Activated CD4-positive, alpha-beta memory T cell treated with anti-CD3 and anti-CD28 coated beads for 36 hours (primary cell): ENCODE measurements at regions of chr15 and their contacts with region 1.

Region 1: GRCh38 chr15:38563723-38564519 is 693 bp downstream of the RASGRP1 start:
- DNase-seq: peak; percentile 92
- H3K4me3 Mint-ChIP-seq: peak overlapping the region; percentile 95
- H3K27ac Mint-ChIP-seq: peak overlapping the region; percentile 99
- H3K4me1 Mint-ChIP-seq: peaks cover 53% of the 10 kb centered on the region
- H3K27me3 Mint-ChIP-seq: no peaks in the 10 kb centered on the region

Region 2: DNA sequence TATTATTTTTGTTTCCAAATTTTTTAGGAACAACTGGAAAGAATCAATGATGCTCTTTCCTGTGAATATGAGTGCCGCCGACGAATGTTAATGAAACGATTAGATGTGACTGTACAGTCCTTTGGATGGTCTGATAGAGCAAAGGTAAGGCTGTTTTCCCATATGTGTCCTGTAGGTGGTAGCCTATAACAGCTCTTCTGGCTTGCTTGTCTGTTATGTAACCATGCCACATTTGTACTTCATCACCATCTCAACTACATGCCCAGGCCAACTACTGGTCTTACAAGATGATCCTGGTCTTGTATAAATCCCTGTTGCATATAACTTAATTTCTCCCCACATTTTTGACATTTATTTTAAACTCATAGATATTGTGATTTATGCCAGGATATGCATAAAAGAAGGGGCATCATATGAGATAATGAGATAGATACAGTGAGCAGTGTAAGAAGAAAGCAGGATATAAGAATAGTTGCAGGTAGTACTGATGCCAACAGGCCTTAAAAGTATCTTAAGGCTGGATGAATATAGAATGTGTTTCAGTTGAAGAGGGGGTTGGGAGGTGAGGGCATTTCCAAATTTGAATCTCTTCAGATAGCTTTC is 89.7 kb before region 1 on chr15:
- CTCF ChIA-PET with region 1: interaction called, 12 read pairs
- POLR2A ChIA-PET with region 1: interaction called, 3 read pairs
- intact Hi-C with region 1: loop called (anchors 1 kb)
- DNase-seq: no peak
- H3K4me3 Mint-ChIP-seq: no peak overlapping the region
- H3K27ac Mint-ChIP-seq: no peak overlapping the region
- H3K4me1 Mint-ChIP-seq: peaks cover 9% of the 10 kb centered on the region
- H3K27me3 Mint-ChIP-seq: no peaks in the 10 kb centered on the region

Region 3: DNA sequence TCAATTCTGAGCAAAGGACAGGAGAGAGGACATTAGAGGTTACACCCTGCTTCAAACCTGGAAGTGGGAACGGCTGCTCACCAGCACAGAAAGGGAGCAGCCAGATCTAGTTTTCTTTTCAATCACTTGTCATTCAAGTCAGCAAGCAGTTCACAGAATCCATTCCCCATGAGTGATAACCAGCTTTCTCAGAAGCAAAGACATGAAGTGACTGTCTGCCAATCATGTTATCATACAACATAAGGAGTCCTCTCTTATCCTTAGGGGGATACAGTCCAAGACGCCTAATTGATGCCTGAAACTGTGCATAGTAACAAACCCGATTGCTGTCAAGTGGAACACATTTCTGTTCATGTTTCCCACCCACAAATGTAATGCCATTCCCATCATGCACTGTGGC is 55.3 kb before region 1 on chr15:
- CTCF ChIA-PET with region 1: interaction called, 16 read pairs
- POLR2A ChIA-PET with region 1: interaction called, 4 read pairs
- intact Hi-C with region 1: loop called (anchors 1 kb)
- DNase-seq: peak; percentile 55
- H3K4me3 Mint-ChIP-seq: no peak overlapping the region
- H3K27ac Mint-ChIP-seq: peak overlapping the region; percentile 88
- H3K4me1 Mint-ChIP-seq: peaks cover 38% of the 10 kb centered on the region
- H3K27me3 Mint-ChIP-seq: no peaks in the 10 kb centered on the region

Region 4: GRCh38 chr15:38631126-38632075 is 67.5 kb after region 1 on chr15:
- CTCF ChIA-PET with region 1: interaction called, 17 read pairs
- POLR2A ChIA-PET with region 1: interaction called, 15 read pairs
- intact Hi-C with region 1: no loop called
- DNase-seq: no peak
- H3K4me3 Mint-ChIP-seq: no peak overlapping the region
- H3K27ac Mint-ChIP-seq: peak overlapping the region; percentile 87
- H3K4me1 Mint-ChIP-seq: peaks cover 39% of the 10 kb centered on the region
- H3K27me3 Mint-ChIP-seq: no peaks in the 10 kb centered on the region

Region 5: DNA sequence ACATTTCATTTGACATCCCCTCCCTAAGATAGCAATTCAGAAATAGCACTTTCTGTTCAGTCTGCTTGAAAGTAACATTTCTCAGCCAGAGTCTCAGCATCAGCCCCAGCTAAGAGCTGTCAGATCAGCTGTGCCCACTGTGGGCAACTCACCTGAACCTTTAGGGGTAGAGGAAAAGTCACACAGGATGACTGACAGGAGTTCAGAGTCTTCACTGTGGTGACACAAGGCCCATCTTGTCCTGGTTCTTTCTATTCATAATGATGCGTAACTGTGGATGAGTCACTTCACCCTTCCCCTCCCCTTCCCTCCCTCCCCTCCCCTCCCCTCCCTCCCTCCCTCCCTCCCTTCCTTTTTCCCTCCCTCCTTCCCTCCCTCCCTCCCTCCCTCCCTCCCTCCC is 96.8 kb after region 1 on chr15:
- CTCF ChIA-PET with region 1: interaction called, 13 read pairs
- POLR2A ChIA-PET with region 1: interaction called, 7 read pairs
- intact Hi-C with region 1: loop called (anchors 1 kb)
- DNase-seq: peak; percentile 65
- H3K4me3 Mint-ChIP-seq: peak overlapping the region; percentile 62
- H3K27ac Mint-ChIP-seq: peak overlapping the region; percentile 75
- H3K4me1 Mint-ChIP-seq: peaks cover 77% of the 10 kb centered on the region
- H3K27me3 Mint-ChIP-seq: no peaks in the 10 kb centered on the region

Region 6: DNA sequence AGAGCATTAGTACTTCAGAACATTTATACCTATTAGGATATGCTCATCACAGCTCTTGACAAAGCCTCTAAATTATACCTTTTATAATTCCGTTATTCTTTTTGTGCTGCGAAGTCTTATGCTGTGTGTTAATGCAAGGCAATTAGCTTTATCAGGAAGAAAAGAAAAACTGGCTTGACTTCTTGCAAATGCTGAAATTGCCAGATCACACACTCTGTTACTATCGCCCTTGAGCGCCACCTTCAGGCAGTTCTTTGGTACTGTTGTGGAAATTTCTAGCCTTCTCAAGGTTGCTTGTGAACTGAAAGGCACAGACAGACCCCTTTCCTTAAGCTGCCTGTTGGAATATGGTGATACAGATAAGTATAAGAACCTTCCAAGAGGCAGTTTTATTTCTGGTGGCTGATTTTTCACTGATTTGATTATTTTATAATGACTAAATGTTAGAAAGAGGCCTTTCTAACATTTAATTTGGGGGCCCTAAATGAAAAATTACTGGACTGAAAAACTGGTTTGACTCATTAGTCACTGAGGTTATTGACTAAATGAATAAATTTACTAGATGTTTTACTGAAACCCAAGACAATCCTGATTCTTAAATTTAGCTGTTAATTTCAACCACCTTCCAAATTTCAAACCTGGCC is 126.9 kb after region 1 on chr15:
- CTCF ChIA-PET with region 1: interaction called, 551 read pairs
- POLR2A ChIA-PET with region 1: interaction called, 307 read pairs
- intact Hi-C with region 1: loop called (anchors 1 kb)
- DNase-seq: peak; percentile 87
- H3K4me3 Mint-ChIP-seq: peak overlapping the region; percentile 31
- H3K27ac Mint-ChIP-seq: peak overlapping the region; percentile 71
- H3K4me1 Mint-ChIP-seq: peaks cover 87% of the 10 kb centered on the region
- H3K27me3 Mint-ChIP-seq: no peaks in the 10 kb centered on the region

Region 7: DNA sequence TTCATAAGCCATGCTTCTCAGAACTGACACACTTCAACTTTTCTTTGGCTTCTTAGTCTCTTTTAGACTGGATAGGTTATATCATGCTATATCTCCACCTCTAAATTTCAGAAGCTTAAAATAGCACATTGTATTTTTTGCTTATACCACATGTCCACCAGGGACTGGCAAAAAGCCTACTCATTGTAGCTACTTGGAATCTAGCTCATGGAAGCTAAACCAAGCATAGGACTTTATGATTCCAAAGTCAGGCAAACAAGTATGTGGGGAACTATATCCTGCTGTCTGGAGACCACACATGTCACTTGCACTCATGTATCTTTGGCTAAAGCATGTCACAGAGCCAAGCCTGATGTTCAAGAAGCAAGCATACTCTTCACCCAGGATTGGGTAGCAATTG is 245.7 kb after region 1 on chr15:
- CTCF ChIA-PET with region 1: no interaction called
- POLR2A ChIA-PET with region 1: no interaction called
- intact Hi-C with region 1: no loop called
- DNase-seq: no peak
- H3K4me3 Mint-ChIP-seq: no peak overlapping the region
- H3K27ac Mint-ChIP-seq: no peak overlapping the region
- H3K4me1 Mint-ChIP-seq: no peaks in the 10 kb centered on the region
- H3K27me3 Mint-ChIP-seq: no peaks in the 10 kb centered on the region